Endothelial cell of umbilical vein (primary cell): ENCODE measurements at regions of chr6 and their contacts with region 1.

Region 1: GRCh38 chr6:16409531-16410441 is 171.4 kb downstream of the GMPR start:
- DNase-seq: peak; percentile 67
- H3K4me3 ChIP-seq: no peak overlapping the region
- H3K27ac ChIP-seq: no peak overlapping the region
- H3K4me1 ChIP-seq: no peaks in the 10 kb centered on the region
- H3K27me3 ChIP-seq: no peaks in the 10 kb centered on the region
- CTCF ChIP-seq: peak; percentile 87 to 89
- POLR2A ChIP-seq: no peak

Region 2: DNA sequence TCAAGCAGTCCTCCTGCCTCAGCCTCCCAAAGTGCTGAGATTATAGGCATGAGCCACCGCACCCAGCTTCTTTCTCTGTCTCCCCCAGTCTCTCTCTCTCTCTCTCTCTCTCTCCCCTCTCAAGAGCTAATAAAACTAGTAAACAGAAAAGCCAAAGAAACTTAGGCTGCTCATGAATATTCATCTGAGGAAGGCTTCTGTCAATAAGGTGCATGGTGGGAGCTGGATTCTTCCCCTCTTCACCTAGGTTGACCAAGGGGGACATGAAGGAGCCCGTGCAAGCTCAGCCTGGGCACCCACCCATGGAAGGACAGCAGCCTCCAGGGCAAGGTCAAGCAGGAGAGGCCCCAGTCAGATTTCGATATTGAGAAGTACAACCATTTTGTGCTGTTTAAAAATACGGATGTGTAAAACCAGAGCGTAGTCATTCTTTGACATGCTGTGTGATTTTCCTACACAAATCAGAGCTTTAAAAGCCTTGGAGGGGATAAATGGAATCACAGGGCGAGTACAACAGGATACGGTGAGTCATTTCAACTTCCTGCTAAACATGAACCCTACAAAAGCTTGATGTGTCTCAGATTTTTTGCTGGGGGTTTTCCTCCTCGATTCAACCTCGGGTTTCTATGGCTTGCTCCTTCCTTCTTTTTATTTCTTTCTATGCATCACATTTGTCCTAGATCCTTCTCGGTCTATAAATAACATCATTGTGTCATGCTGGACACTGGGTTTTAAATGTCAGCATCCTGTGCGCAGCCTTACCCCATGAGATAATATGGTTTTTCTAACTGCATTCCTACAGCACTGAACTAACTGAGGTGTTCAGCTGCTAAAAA is 1532.8 kb before region 1 on chr6:
- CTCF ChIA-PET with region 1: no interaction called
- POLR2A ChIA-PET with region 1: no interaction called
- dilution Hi-C with region 1: no loop called
- intact Hi-C with region 1: no loop called
- DNase-seq: peak; percentile 88
- H3K4me3 ChIP-seq: no peak overlapping the region
- H3K27ac ChIP-seq: peak overlapping the region; percentile 49
- H3K4me1 ChIP-seq: peaks cover 37% of the 10 kb centered on the region
- H3K27me3 ChIP-seq: peaks cover 0 to 3% of the 10 kb centered on the region in 2 experiments
- CTCF ChIP-seq: no peak
- POLR2A ChIP-seq: no peak

Region 3: GRCh38 chr6:16398587-16398986 is 11.2 kb before region 1 on chr6:
- CTCF ChIA-PET with region 1: interaction called, 18 read pairs
- POLR2A ChIA-PET with region 1: no interaction called
- dilution Hi-C with region 1: no loop called
- intact Hi-C with region 1: no loop called
- DNase-seq: peak; percentile 69
- H3K4me3 ChIP-seq: no peak overlapping the region
- H3K27ac ChIP-seq: no peak overlapping the region
- H3K4me1 ChIP-seq: no peaks in the 10 kb centered on the region
- H3K27me3 ChIP-seq: no peaks in the 10 kb centered on the region
- CTCF ChIP-seq: no peak
- POLR2A ChIP-seq: no peak

Region 4: GRCh38 chr6:16425881-16426615 is 16.3 kb after region 1 on chr6:
- CTCF ChIA-PET with region 1: interaction called, 13 read pairs
- POLR2A ChIA-PET with region 1: no interaction called
- dilution Hi-C with region 1: no loop called
- intact Hi-C with region 1: no loop called
- DNase-seq: no peak
- H3K4me3 ChIP-seq: no peak overlapping the region
- H3K27ac ChIP-seq: no peak overlapping the region
- H3K4me1 ChIP-seq: no peaks in the 10 kb centered on the region
- H3K27me3 ChIP-seq: no peaks in the 10 kb centered on the region
- CTCF ChIP-seq: no peak
- POLR2A ChIP-seq: no peak